Transverse colon (tissue), 4 donors: ENCODE measurements at regions of chr6 and their contacts with region 1.

Region 1: DNA sequence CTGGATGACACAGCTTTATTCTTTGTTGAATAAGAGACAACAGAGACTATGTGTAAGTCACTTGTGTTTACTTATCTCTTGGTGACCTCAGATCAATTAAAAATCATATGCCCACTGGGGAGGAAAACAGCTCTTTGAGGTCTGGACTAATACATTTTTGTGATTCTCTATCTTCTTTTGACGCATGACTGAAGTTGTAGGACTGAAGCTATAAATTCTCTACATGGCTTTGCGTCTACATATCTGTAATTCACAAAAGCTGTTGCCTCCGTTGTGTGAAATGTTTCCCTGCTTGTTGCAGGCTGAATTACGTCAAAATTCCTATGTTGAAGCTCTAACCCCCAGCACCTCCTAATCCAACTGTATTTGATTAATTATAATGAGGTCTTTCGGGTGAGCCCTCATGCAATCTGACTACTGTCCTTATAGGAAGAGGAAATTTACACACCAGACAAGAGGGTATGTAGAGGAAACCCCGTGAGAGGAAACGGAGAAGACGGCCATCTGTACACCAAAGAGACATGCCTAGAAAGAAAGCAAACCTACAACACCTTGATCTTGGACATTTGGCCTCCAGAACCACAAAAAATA is 481.6 kb downstream of the PRKN start:
- DNase-seq: no peak
- H3K4me3 ChIP-seq: no peak overlapping the region
- H3K27ac ChIP-seq: no peak overlapping the region
- H3K4me1 ChIP-seq: no peaks in the 10 kb centered on the region
- H3K27me3 ChIP-seq: no peaks in the 10 kb centered on the region
- CTCF ChIP-seq: no peak
- EP300 ChIP-seq: no peak
- POLR2A ChIP-seq: no peak

Region 2: GRCh38 chr6:162198925-162199324 is 47.0 kb before region 1 on chr6:
- in situ Hi-C with region 1: no loop called
- intact Hi-C with region 1: loop called (anchors 2 kb)
- DNase-seq: no peak
- H3K4me3 ChIP-seq: no peak overlapping the region
- H3K27ac ChIP-seq: no peak overlapping the region
- H3K4me1 ChIP-seq: peaks cover 0 to 3% (median 0%) of the 10 kb centered on the region in 4 donors
- H3K27me3 ChIP-seq: no peaks in the 10 kb centered on the region
- CTCF ChIP-seq: no peak
- EP300 ChIP-seq: no peak
- POLR2A ChIP-seq: no peak

Region 3: GRCh38 chr6:162217811-162218493 is 28.0 kb before region 1 on chr6:
- in situ Hi-C with region 1: no loop called
- intact Hi-C with region 1: no loop called
- DNase-seq: no peak
- H3K4me3 ChIP-seq: no peak overlapping the region
- H3K27ac ChIP-seq: no peak overlapping the region
- H3K4me1 ChIP-seq: no peaks in the 10 kb centered on the region
- H3K27me3 ChIP-seq: no peaks in the 10 kb centered on the region
- CTCF ChIP-seq: no peak
- EP300 ChIP-seq: no peak
- POLR2A ChIP-seq: no peak

Region 4: DNA sequence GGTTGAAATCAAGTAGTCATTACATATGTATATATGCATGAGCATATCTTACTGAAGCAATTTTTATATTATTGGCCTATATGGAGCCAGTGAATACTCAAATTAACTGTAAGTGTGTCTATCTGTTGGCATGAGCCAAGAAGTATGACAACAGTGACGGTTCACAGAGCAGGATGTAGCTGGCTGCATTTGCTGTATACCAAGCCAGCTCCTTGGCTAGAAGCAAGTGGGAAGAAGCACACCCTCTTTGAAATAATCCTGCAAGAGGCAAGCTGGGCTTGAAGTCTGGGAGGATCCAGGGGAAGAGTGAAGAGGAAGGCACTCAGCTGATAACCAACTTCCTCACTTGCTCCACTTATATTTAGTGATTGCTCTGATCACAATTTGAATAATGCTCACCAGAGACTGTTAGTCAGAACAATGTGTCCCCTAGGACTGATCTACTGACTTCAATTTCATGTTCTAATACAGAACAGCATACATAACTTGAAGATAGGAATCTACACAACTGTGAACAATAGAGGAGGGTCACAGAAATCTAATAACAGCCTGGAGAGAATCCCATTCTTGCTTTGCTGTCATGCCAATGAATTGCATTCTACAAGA is 15.7 kb before region 1 on chr6:
- in situ Hi-C with region 1: no loop called
- intact Hi-C with region 1: loop called (anchors 2 kb)
- DNase-seq: no peak
- H3K4me3 ChIP-seq: no peak overlapping the region
- H3K27ac ChIP-seq: no peak overlapping the region
- H3K4me1 ChIP-seq: no peaks in the 10 kb centered on the region
- H3K27me3 ChIP-seq: no peaks in the 10 kb centered on the region
- CTCF ChIP-seq: no peak
- EP300 ChIP-seq: no peak
- POLR2A ChIP-seq: no peak

Region 5: DNA sequence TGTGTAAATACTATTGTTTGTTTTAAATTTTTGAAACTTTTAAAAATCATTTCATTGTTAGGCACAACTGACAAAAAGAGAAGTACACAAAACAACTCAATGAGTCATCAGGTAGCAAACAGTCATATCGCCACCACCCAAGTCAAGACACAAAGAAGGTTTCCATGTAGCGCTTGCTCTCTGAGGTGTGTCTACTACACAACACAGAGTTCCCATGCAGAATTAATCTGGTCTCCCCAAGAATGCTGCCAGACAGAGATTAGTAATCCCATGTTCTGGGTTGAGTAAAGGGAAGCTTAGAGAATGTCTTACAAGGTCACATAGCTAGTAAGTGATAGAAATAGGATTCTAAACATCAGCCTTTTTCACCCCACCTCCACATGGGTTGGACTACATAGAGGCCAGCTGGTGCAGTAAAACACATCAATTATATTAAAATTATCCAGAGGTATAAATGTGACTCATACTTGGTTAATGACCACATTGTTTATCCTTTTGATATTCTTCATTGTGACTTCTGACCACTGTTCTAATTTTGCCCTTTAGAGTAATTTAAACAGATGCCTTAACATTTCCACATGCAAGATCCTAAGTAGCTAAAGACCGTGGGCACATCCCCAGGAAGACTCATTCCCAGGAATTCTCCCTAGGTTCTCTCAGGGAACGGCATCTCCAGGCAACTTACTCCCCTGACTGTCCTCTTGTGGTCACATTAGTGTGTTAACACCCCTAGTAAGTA is 68.2 kb after region 1 on chr6:
- in situ Hi-C with region 1: no loop called
- intact Hi-C with region 1: loop called (anchors 2 kb)
- DNase-seq: no peak
- H3K4me3 ChIP-seq: no peak overlapping the region
- H3K27ac ChIP-seq: no peak overlapping the region
- H3K4me1 ChIP-seq: no peaks in the 10 kb centered on the region
- H3K27me3 ChIP-seq: no peaks in the 10 kb centered on the region
- CTCF ChIP-seq: no peak
- EP300 ChIP-seq: no peak
- POLR2A ChIP-seq: no peak

Region 6: DNA sequence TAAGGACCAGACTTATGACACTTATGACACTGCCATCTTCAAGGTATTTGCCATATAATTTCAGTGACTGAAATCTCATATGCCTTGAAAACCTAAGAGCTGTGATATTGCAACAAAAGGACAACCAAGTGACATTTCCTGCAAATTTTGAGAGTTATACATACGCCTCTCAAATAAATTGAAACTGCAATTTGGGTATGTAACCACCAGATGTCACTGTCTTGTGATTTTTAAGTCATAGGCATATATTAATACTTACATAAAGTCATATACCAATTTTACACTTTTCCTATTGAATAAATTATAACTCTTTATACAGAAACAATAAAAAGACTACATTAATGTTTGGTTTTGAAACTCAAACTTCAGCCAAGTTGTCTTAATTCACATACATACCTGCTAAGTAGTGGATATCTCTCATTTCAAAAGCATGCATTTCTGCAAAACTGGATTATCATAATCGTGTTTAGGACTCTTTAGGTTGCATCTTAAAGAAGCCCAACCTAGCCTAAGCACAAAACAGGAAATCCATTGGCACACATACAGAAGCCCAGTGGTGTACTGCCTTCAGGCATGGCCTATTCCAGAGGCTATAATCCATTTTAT is 662.1 kb after region 1 on chr6:
- in situ Hi-C with region 1: no loop called
- intact Hi-C with region 1: no loop called
- DNase-seq: no peak
- H3K4me3 ChIP-seq: no peak overlapping the region
- H3K27ac ChIP-seq: no peak overlapping the region
- H3K4me1 ChIP-seq: no peaks in the 10 kb centered on the region
- H3K27me3 ChIP-seq: no peaks in the 10 kb centered on the region
- CTCF ChIP-seq: peak; percentile 17 to 44 (median 36)
- EP300 ChIP-seq: no peak
- POLR2A ChIP-seq: no peak